ENCODE measurements at regions of chr7 and their contacts with region 1.

Region 1: DNA sequence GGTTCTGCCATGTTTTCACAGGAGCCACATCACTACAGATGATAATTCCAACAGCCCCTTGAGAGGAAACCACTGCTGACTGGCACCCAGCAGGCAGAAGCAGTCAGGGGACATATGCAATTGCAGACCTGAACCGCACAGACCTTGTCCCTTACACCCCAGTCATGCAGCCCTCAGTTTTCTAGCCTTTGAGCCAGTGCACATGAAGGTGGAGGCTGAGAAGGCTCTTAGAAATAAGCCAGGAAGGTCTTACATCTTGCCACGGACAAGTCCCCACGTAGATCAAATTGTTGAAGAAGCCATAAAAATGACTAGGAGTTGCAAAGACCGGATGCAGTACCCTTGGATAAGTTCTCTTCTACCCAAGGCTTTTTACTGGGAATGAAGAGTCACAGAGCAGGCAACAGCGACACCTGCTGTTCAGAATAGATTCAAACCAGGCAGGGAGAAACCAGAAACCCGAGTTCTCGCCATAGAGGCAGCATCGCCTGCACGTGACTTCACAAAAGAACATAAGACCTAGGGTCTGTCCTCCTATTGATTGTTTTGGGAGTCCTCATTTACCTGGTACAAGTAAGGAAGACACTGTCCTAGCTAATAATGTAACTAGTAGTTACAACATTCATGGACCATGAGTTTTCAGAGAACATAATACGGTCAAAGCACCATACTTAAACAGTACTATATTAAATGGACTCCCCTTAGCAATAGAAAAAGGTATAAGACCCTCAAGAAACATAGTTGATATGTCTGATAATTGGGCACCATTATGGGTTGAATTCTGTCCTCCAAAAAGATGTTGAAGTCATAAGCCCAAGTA is 11.1 kb downstream of the STEAP1B start:
- DNase-seq: peak; percentile 60
- H3K4me3 ChIP-seq: no peak overlapping the region
- CTCF ChIP-seq: peak; percentile 79

Region 2: DNA sequence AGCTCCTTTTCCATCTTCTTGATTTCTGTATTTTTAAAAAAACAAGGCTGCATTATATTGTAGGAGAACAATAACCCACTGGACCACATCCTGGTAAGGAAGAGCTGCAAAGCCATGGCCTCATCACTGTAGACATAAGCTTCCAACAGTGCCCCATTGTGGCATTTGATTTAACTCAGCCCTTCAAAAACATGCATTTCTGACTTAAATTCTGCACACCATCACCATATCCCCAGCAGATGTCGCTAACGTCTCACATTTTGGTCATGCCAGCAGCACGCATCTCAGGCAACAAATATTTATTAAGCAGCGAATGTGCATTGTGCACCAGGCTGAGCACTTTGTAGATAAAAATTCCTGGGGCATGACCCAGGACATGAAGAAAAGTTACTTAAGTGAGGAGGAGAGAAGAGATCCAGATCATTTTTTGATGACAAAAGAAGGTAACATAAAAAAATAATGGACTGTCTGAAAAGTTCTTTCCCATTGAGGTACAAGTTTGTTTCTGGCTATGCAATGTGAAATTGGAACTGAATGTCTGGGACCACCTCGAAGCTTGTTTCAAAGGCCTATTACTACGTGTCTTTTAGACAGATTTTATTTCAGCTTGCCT is 378.5 kb before region 1 on chr7:
- in situ Hi-C with region 1: loop called (anchors 10 kb)
- DNase-seq: peak; percentile 82
- H3K4me3 ChIP-seq: no peak overlapping the region
- CTCF ChIP-seq: peak; percentile 79

Region 3: DNA sequence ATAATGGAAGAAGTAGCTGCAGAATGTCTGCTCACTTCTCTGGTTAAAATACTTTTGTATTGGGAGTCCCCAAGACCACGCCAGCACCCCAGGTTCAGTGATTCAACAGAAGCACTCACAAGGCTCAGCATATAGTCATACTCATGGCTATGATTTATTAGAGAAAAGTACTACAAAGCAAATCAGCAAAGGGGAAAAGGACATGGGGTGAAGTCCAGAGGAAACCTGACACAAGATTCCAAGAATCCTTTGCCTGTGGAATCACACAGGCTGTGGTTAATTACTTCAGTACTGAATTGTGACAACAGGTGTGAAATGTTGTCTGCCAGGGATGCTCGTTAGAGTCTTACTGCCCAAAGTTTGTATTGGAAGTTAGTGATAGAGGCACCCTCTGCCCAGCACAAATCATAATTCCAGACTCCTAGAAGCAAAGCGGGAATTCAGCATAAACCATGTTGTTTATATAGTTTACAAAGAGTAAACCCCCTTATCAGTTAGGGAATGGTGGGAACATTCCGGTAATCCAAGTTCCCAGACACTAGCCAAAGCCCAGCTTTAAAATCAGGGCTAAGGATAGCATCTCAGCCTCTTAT is 445.7 kb after region 1 on chr7:
- in situ Hi-C with region 1: no loop called
- DNase-seq: no peak
- H3K4me3 ChIP-seq: no peak overlapping the region
- CTCF ChIP-seq: no peak

Measured in astrocyte of the cerebellum (primary cell).